H1 (cell line): ENCODE measurements at regions of chr1 and their contacts with region 1.

Region 1: GRCh38 chr1:205523891-205524793 is 19.7 kb downstream of the CDK18 start:
- DNase-seq: peak; percentile 63 to 94
- H3K4me3 ChIP-seq: no peak overlapping the region
- H3K27ac ChIP-seq: no peak overlapping the region
- H3K4me1 ChIP-seq: peaks cover under 1 to 27% (median 12%) of the 10 kb centered on the region in 4 experiments
- H3K27me3 ChIP-seq: no peaks in the 10 kb centered on the region
- CTCF ChIP-seq: peak; percentile 73 to 94 (median 93)
- EP300 ChIP-seq: no peak
- POLR2A ChIP-seq: no peak
- RAD21 ChIP-seq: peak; percentile 96 to 97

Region 2: GRCh38 chr1:205190845-205191577 is 333.1 kb before region 1 on chr1:
- CTCF ChIA-PET with region 1: no interaction called
- POLR2A ChIA-PET with region 1: no interaction called
- DNase-seq: no peak
- H3K4me3 ChIP-seq: peak overlapping the region in 2 of 4 experiments; percentile 15 to 34; a peak in 3 of 8 replicates
- H3K27ac ChIP-seq: no peak overlapping the region
- H3K4me1 ChIP-seq: peaks cover 5 to 45% (median 30%) of the 10 kb centered on the region in 4 experiments
- H3K27me3 ChIP-seq: no peaks in the 10 kb centered on the region
- CTCF ChIP-seq: no peak
- EP300 ChIP-seq: no peak
- POLR2A ChIP-seq: no peak
- RAD21 ChIP-seq: no peak

Region 3: DNA sequence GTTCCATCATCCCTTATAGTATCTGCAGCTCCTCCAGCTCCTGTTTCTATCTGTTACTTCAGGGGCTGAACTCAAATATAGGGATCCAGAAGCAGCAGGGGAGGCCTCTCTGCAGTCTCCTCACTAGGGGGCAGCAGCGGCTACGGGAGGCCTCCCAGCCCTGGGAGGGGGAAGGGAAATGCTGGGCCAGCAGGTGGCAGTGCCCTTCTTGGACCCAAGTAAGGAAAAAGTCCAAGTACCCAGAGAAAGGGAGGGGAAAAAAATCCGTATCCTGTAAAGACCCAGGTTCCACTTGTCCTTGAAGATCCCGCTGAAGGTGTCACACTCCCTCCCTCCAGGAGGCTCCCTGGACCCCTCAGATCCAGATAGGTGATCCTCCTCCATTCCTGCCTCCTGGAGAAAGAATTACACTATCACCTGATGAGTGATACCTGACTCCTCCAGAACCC is 188.5 kb before region 1 on chr1:
- CTCF ChIA-PET with region 1: interaction called, 51 read pairs
- POLR2A ChIA-PET with region 1: no interaction called
- DNase-seq: peak; percentile 78 to 91
- H3K4me3 ChIP-seq: no peak overlapping the region
- H3K27ac ChIP-seq: no peak overlapping the region
- H3K4me1 ChIP-seq: peaks cover 0 to 3% (median under 1%) of the 10 kb centered on the region in 4 experiments; a peak in 4 of 7 replicates
- H3K27me3 ChIP-seq: no peaks in the 10 kb centered on the region; a peak in 3 of 7 replicates
- CTCF ChIP-seq: peak; percentile 93 to 99 (median 94)
- EP300 ChIP-seq: no peak
- POLR2A ChIP-seq: no peak
- RAD21 ChIP-seq: peak; percentile 78 to 89

Region 4: GRCh38 chr1:205391386-205391785 is 132.8 kb before region 1 on chr1:
- CTCF ChIA-PET with region 1: interaction called, 98 read pairs
- POLR2A ChIA-PET with region 1: interaction called, 3 read pairs
- DNase-seq: no peak
- H3K4me3 ChIP-seq: no peak overlapping the region
- H3K27ac ChIP-seq: no peak overlapping the region
- H3K4me1 ChIP-seq: no peaks in the 10 kb centered on the region
- H3K27me3 ChIP-seq: no peaks in the 10 kb centered on the region
- CTCF ChIP-seq: no peak
- EP300 ChIP-seq: no peak
- POLR2A ChIP-seq: no peak
- RAD21 ChIP-seq: no peak

Region 5: DNA sequence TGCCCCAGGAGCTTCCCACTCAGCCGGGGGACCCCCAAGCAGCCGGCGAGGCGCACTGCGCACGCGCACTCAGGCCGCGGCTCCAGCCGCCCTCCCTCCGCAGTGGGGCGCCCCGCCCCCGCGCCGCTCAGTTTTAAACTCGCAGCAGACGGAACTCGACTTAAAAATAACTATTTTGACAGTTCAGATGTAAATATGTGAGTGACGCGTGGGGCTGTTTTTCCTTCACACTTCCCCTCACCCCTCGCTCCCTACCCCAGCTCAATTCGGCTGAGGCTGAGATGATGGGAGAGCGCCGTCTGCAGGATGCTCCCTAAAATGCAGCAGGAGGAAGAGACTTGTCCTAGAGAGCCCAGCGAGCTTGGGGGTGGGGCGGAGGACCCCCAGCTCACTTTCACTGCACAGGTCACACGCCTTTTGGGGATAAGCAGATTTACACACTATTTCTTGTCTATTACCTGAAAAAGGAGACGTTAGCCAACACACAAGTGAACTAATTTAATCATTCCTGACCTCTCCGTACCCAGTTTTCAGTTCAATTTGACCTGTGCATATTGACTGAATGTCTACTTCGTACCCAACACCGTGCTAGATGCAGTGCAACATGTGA is 93.3 kb before region 1 on chr1:
- CTCF ChIA-PET with region 1: interaction called, 15 read pairs
- POLR2A ChIA-PET with region 1: no interaction called
- DNase-seq: peak in 1 of 2 experiments; percentile 91
- H3K4me3 ChIP-seq: peak overlapping the region; percentile 25 to 73 (median 44)
- H3K27ac ChIP-seq: no peak overlapping the region
- H3K4me1 ChIP-seq: peaks cover 2 to 5% (median 3%) of the 10 kb centered on the region in 4 experiments; a peak in 4 of 7 replicates
- H3K27me3 ChIP-seq: peaks cover 0 to 20% (median 11%) of the 10 kb centered on the region in 4 experiments; a peak in 6 of 7 replicates
- CTCF ChIP-seq: peak; percentile 85 to 97 (median 96)
- EP300 ChIP-seq: 0 out of 3 replicates have a peak, but pooled peaks of 1 of the 2 experiments have one; percentile 4
- POLR2A ChIP-seq: no peak; a peak in 1 of 3 replicates
- RAD21 ChIP-seq: peak; percentile 69 to 82

Region 6: GRCh38 chr1:205477759-205478247 is 46.3 kb before region 1 on chr1:
- CTCF ChIA-PET with region 1: interaction called, 1,626 read pairs
- POLR2A ChIA-PET with region 1: interaction called, 3 read pairs
- DNase-seq: no peak
- H3K4me3 ChIP-seq: no peak overlapping the region
- H3K27ac ChIP-seq: no peak overlapping the region
- H3K4me1 ChIP-seq: peaks cover 0 to 29% (median 19%) of the 10 kb centered on the region in 4 experiments; a peak in 6 of 7 replicates
- H3K27me3 ChIP-seq: peaks cover 0 to 2% (median 0%) of the 10 kb centered on the region in 4 experiments; a peak in 3 of 7 replicates
- CTCF ChIP-seq: no peak
- EP300 ChIP-seq: no peak
- POLR2A ChIP-seq: no peak
- RAD21 ChIP-seq: no peak

Region 7: DNA sequence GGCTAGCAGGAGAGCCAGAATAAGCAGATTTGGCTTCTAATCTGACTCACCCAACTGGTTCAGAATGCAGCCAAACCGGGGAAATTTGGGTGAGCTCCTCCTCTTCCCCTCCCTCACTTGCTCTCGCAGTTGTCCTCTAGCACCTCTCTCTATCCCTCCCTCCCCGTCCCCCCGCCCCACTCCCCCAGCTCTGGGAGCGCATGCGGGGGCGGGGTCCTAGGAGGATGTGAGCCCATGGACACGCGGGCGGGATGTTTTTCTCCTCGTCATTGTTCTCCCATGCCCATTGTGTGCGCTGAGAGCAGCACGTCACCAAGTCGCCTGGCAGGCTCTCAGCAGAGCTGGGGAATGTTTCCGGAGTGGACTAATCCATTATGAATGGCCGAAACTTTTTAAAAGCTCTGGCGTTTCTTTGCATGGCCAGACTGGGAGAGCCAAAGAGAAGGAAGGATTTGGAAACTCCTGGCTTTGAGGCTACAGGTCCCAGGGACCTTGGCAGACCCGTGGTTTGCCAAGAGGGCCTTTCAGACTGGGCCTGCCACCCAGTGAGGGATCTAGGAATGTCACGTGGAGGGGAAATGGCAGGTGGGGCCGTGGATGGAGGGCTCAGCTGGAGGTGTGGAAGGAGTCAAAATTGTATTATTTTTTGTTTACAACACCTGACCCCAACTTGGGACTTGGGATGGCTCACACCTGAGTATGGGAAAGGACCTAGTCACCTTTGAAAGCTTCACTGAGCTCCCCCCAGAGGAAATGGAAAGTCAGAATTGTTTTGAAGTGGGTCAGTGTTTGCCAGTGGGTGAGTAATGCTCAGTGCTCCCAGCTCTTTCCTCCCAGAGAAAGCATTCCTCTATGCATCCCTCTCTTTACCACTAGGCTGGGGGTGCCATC is 19.5 kb after region 1 on chr1:
- CTCF ChIA-PET with region 1: interaction called, 39 read pairs
- POLR2A ChIA-PET with region 1: interaction called, 5 read pairs
- DNase-seq: peak; percentile 50 to 80
- H3K4me3 ChIP-seq: peak overlapping the region; percentile 12 to 52 (median 28); a peak in 7 of 8 replicates
- H3K27ac ChIP-seq: no peak overlapping the region; the same call in 1 of the 2 replicates
- H3K4me1 ChIP-seq: peaks cover 0 to 14% (median 7%) of the 10 kb centered on the region in 4 experiments; a peak in 5 of 7 replicates
- H3K27me3 ChIP-seq: peaks cover 0 to 26% (median 13%) of the 10 kb centered on the region in 4 experiments; a peak in 6 of 7 replicates
- CTCF ChIP-seq: no peak
- EP300 ChIP-seq: no peak
- POLR2A ChIP-seq: no peak
- RAD21 ChIP-seq: no peak

Region 8: DNA sequence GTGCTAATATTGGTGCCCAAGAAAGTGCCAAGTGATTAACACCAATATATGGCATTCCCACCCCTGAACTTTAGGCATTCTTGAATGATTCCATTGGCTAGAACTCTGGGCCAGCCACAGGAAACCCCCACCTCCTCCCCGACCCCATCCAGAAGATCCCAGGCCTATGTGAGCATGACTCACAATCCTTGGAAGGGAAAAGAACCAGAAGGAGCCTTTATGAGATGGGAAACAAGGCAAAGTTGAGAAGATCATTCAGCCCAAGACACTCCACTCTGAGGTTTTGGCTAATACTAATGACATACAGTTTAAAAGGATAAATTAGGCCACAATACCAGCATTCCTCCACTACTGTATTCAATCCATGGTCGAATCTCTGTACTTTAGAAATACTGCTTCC is 85.9 kb after region 1 on chr1:
- CTCF ChIA-PET with region 1: no interaction called
- POLR2A ChIA-PET with region 1: no interaction called
- DNase-seq: no peak
- H3K4me3 ChIP-seq: no peak overlapping the region
- H3K27ac ChIP-seq: no peak overlapping the region
- H3K4me1 ChIP-seq: no peaks in the 10 kb centered on the region
- H3K27me3 ChIP-seq: peaks cover 0 to 2% (median 0%) of the 10 kb centered on the region in 4 experiments; a peak in 1 of 7 replicates
- CTCF ChIP-seq: no peak
- EP300 ChIP-seq: no peak
- POLR2A ChIP-seq: no peak
- RAD21 ChIP-seq: no peak